ENCODE measurements at regions of chr11 and their contacts with region 1.

Region 1: DNA sequence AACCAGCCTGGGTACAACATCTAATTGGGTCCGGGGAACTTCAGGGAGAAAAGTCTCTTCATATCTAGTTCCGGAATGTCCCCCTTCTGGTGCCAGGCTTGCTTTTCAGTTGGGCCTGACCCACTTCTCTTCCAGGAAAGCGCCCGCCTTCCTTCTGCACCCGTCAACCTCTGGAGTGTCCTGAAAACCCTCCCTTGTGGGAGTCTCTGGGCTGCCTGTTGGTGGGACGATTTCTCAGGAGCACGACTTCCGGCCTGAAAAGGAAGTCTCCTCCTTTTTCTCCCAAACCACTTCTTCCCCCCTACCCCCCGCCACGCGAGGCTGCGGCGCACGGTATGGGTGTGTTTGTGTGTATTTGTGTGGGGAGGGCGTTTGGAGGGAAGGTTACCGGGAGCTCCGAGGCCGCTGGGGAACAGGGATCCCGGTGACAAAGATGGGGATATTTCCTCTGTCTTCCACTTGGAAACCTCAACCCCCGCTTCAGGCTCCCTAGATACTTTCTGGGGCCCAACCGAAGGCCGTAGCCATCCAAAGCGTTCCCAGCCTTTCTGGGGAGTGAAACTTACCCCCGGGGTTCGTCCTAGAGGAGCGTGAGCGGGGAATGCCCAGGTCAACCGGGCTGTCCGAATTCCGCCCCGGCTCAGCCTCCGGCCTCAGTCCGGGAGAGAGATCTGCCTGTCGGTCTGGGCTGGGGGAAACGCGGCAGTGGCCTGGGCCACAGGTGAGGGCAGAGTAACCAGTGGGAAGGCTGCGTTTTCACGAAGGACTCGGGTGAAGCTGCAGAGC is at the start of gene NKAPD1:
- DNase-seq: peak; percentile 84 to 91
- H3K4me3 ChIP-seq: peak within 1 kb of the TSS; percentile 77 to 93
- H3K27ac ChIP-seq: peak within 1 kb of the TSS; percentile 82 to 95
- H3K4me1 ChIP-seq: peaks cover 0 to 21% (median 14%) of the 10 kb centered on the region in 4 donors
- H3K27me3 ChIP-seq: no peaks in the 10 kb centered on the region
- CTCF ChIP-seq: peak; percentile 7 to 13

Region 2: DNA sequence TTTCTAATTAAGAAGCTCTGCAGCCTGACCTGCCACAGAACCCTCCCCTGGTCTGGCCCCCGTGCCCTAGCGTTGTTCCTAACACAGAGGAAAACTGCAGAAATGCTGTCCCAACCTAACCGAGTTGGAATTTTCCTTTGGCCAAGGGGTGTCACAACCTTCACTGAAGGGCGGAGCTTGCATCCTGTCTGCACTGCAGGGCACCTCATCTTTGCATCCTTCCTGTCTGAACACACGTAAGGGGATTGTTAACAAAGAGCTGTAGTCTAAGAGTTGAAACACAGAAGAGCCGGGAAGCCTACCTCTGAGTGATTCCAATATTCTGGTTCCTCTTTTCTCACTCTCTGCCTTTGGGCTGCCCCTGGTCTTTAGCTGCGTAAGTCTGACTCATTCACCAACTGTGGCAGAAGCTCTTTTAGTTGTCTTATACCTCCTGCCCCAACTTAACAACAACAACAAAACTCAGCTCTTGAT is 135.5 kb before region 1 on chr11:
- intact Hi-C with region 1: loop called (anchors 10 kb)
- DNase-seq: no peak
- H3K4me3 ChIP-seq: peak overlapping the region in 1 of 2 donors; percentile 9
- H3K27ac ChIP-seq: peak overlapping the region; percentile 51 to 76
- H3K4me1 ChIP-seq: peaks cover 0 to 32% (median 19%) of the 10 kb centered on the region in 4 donors
- H3K27me3 ChIP-seq: no peaks in the 10 kb centered on the region
- CTCF ChIP-seq: no peak

Region 3: DNA sequence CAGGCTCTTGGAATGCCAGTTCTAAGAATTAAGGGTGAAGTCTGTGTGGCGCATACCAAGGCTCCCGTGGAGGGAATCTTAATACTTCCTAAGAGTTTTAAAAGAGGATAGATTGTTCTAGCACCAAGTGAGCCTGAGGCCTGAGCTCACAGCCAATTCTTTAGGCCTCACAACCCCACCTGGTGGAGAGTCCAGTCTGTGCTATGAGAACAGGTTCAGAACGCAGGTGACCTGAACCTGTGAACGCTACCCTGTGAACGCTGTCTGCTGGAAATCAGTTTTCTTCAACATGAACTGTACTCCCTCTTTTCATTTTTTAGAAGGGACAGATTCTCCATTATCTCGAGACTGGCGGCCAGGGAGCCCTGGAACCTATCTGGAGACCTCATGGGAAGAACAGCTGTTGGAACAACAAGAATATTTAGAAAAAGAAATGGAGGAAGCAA is 92.2 kb before region 1 on chr11:
- intact Hi-C with region 1: loop called (anchors 10 kb)
- DNase-seq: peak in 1 of 2 donors; percentile 35
- H3K4me3 ChIP-seq: no peak overlapping the region
- H3K27ac ChIP-seq: peak overlapping the region in 1 of 2 donors; percentile 17
- H3K4me1 ChIP-seq: peaks cover 0 to 30% (median 17%) of the 10 kb centered on the region in 4 donors
- H3K27me3 ChIP-seq: no peaks in the 10 kb centered on the region
- CTCF ChIP-seq: peak; percentile 46 to 49

Measured in tibial artery (tissue), 4 donors.